ENCODE measurements at regions of chr13 and their contacts with region 1.

Region 1: GRCh38 chr13:52652196-52652979 is at the start of gene SUGT1:
- DNase-seq: peak; percentile 96
- ATAC-seq: peak; percentile 97
- H3K4me3 Mint-ChIP-seq: no peak within 1 kb of the TSS
- H3K27ac Mint-ChIP-seq: no peak within 1 kb of the TSS
- H3K4me1 Mint-ChIP-seq: peaks cover 20% of the 10 kb centered on the region
- H3K27me3 Mint-ChIP-seq: no peaks in the 10 kb centered on the region
- CTCF ChIP-seq: peak; percentile 72
- total RNA-seq, gene SUGT1: 52.0 to 52.5 TPM

Region 2: GRCh38 chr13:52617070-52618060 is 35.0 kb before region 1 on chr13:
- CTCF ChIA-PET with region 1: interaction called, 26 read pairs
- POLR2A ChIA-PET with region 1: interaction called, 23 read pairs
- intact Hi-C with region 1: loop called (anchors 5 kb)
- DNase-seq: peak; percentile 90
- ATAC-seq: peak; percentile 96
- H3K4me3 Mint-ChIP-seq: peak overlapping the region; percentile 99
- H3K27ac Mint-ChIP-seq: peak overlapping the region; percentile 95
- H3K4me1 Mint-ChIP-seq: peaks cover 28% of the 10 kb centered on the region
- H3K27me3 Mint-ChIP-seq: no peaks in the 10 kb centered on the region
- CTCF ChIP-seq: no peak

Region 3: DNA sequence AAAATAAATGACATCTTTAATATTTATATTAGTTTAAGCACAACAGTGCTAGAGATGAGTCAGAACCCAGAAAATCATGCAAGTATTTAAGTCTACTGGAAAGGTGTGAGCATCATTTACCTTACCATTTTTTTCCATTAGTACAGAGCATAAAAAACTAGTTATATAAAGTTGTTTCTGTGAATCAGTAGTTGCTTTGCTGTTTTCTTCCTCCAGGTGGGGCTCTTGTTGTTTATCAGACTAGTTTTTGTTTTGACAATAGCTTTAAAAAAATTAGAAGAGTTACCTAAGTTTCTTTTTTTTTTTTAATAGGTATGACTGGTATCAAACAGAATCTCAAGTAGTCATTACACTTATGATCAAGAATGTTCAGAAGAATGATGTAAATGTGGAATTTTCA is 12.9 kb after region 1 on chr13:
- CTCF ChIA-PET with region 1: interaction called, 33 read pairs
- POLR2A ChIA-PET with region 1: interaction called, 6 read pairs
- intact Hi-C with region 1: no loop called
- DNase-seq: no peak
- ATAC-seq: peak; percentile 45
- H3K4me3 Mint-ChIP-seq: no peak overlapping the region
- H3K27ac Mint-ChIP-seq: no peak overlapping the region
- H3K4me1 Mint-ChIP-seq: peaks cover 2% of the 10 kb centered on the region
- H3K27me3 Mint-ChIP-seq: no peaks in the 10 kb centered on the region
- CTCF ChIP-seq: peak; percentile 55

Region 4: GRCh38 chr13:53167561-53167960 is 515.2 kb after region 1 on chr13:
- CTCF ChIA-PET with region 1: no interaction called
- POLR2A ChIA-PET with region 1: no interaction called
- intact Hi-C with region 1: no loop called
- DNase-seq: no peak
- ATAC-seq: no peak
- H3K4me3 Mint-ChIP-seq: no peak overlapping the region
- H3K27ac Mint-ChIP-seq: no peak overlapping the region
- H3K4me1 Mint-ChIP-seq: no peaks in the 10 kb centered on the region
- H3K27me3 Mint-ChIP-seq: peaks cover 5% of the 10 kb centered on the region
- CTCF ChIP-seq: no peak

Measured in activated CD8-positive, alpha-beta T cell treated with anti-CD3 and anti-CD28 coated beads for 36 hours (primary cell).